ENCODE measurements at regions of chr5 and their contacts with region 1.

Region 1: DNA sequence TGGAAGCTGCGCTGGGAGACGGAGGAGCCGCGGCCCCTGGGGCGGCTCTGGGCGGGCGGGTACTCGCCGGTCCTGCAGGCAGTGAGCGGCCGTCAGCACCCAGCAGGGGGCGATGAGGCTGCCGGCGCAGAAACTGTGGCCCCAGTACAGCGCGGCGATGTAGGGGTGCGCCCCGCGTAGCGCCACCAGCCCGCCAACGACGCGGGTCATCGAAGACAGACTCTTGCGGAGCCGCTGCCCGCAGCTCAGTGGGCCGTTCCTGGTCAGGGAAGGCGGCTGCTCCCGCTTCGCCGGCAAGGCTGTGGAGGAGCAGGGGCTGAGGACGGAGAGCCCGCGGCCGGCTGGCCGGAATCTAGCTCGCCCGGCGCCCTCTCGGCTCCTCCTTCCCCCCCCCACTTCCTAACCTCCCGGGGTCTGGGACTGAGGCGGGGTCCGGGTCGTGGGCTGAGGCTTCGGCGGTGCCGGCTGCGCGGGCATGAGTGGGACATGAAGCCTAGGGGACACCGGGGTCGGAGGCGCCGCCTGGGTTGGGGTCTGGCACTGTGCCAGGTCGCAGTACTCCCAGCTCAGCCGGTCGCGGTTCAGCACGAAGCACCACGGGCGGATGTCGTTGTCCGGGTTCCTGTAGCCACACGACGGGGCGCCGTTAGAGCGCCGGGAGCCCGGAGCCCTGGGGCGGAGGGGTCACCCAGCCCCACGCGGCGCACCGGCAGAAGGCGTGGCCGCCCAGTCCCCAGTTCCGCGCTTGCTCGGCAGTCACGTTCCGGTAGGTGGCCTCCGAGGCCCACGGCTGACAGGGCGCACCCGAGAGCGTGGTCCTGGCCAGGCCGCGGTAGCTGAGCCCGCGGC is 3.6 kb upstream of the PFN3 start:
- DNase-seq: no peak
- H3K4me3 ChIP-seq: peak overlapping the region; percentile 71
- CTCF ChIP-seq: peak; percentile 91

Region 2: DNA sequence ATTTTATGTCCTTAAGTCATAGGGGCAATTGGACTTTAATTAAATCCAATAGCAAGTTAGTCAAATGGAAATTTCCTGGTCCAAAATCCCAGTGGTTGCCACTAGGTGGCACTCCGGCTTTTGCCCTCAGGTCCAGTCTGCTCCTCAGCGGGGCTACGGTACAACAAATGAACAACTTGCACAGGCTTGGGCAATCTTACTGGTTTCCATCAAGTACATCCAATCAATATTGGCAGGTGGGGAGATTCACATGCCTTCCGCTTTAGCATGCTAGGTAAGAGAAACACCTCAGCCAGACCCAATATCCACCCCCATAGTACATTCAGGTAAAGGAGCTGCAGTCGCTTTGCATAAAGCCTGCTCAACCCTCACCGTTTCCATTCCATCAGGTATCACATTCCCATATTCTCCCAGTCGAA is 86.0 kb before region 1 on chr5:
- CTCF ChIA-PET with region 1: interaction called, 35 read pairs
- POLR2A ChIA-PET with region 1: no interaction called
- DNase-seq: peak; percentile 38
- H3K4me3 ChIP-seq: no peak overlapping the region
- CTCF ChIP-seq: peak; percentile 78

Region 3: GRCh38 chr5:177390363-177391300 is 13.4 kb before region 1 on chr5:
- CTCF ChIA-PET with region 1: interaction called, 853 read pairs
- POLR2A ChIA-PET with region 1: interaction called, 4 read pairs
- DNase-seq: no peak
- H3K4me3 ChIP-seq: no peak overlapping the region
- CTCF ChIP-seq: peak; percentile 89

Region 4: GRCh38 chr5:177440211-177440971 is 36.4 kb after region 1 on chr5:
- CTCF ChIA-PET with region 1: interaction called, 376 read pairs
- POLR2A ChIA-PET with region 1: no interaction called
- DNase-seq: no peak
- H3K4me3 ChIP-seq: no peak overlapping the region
- CTCF ChIP-seq: no peak

Region 5: GRCh38 chr5:177467436-177467835 is 63.4 kb after region 1 on chr5:
- CTCF ChIA-PET with region 1: interaction called, 11 read pairs
- POLR2A ChIA-PET with region 1: interaction called, 13 read pairs
- DNase-seq: no peak
- H3K4me3 ChIP-seq: no peak overlapping the region
- CTCF ChIP-seq: no peak